H1 (cell line): ENCODE measurements at regions of chr6 and their contacts with region 1.

Region 1: GRCh38 chr6:168370310-168370991 is 50.9 kb upstream of the DACT2 start:
- DNase-seq: peak; percentile 46 to 97
- H3K4me3 ChIP-seq: no peak overlapping the region
- H3K27ac ChIP-seq: no peak overlapping the region
- H3K4me1 ChIP-seq: no peaks in the 10 kb centered on the region; a peak in 3 of 7 replicates
- H3K27me3 ChIP-seq: no peaks in the 10 kb centered on the region
- CTCF ChIP-seq: peak in 2 of 3 experiments; percentile 85 to 92; a peak in 3 of 4 replicates
- EP300 ChIP-seq: no peak
- POLR2A ChIP-seq: no peak
- RAD21 ChIP-seq: peak; percentile 98 to 100

Region 2: DNA sequence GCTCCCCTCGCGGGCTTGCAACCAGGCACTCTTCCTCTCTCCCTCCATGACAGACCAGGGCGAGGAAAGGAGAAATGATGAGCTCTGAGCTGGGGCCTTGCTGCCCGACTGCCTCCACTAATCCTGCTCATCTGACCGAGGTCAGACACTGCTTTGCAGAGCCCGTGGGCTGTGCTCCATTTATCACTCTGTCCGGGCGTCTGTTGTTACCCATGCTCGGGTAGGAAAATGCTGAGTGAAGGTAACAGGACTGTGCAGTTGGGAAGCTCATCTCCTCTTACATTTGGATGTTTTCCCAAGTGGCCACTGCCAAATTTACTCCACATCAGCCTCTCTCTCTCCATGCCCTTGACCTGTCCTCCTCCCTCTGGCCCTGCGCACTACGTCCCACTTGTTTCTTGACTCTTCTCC is 1758.0 kb before region 1 on chr6:
- CTCF ChIA-PET with region 1: no interaction called
- POLR2A ChIA-PET with region 1: no interaction called
- DNase-seq: no peak
- H3K4me3 ChIP-seq: no peak overlapping the region
- H3K27ac ChIP-seq: no peak overlapping the region
- H3K4me1 ChIP-seq: peaks cover 0 to 8% (median 4%) of the 10 kb centered on the region in 4 experiments; a peak in 4 of 7 replicates
- H3K27me3 ChIP-seq: no peaks in the 10 kb centered on the region
- CTCF ChIP-seq: no peak
- EP300 ChIP-seq: no peak
- POLR2A ChIP-seq: no peak
- RAD21 ChIP-seq: no peak

Region 3: GRCh38 chr6:168025831-168026710 is 344.4 kb before region 1 on chr6:
- CTCF ChIA-PET with region 1: no interaction called
- POLR2A ChIA-PET with region 1: no interaction called
- DNase-seq: peak in 1 of 2 experiments; percentile 37
- H3K4me3 ChIP-seq: no peak overlapping the region
- H3K27ac ChIP-seq: no peak overlapping the region
- H3K4me1 ChIP-seq: peaks cover 0 to 2% (median 0%) of the 10 kb centered on the region in 4 experiments; a peak in 1 of 7 replicates
- H3K27me3 ChIP-seq: no peaks in the 10 kb centered on the region
- CTCF ChIP-seq: no peak
- EP300 ChIP-seq: no peak
- POLR2A ChIP-seq: no peak
- RAD21 ChIP-seq: no peak

Region 4: DNA sequence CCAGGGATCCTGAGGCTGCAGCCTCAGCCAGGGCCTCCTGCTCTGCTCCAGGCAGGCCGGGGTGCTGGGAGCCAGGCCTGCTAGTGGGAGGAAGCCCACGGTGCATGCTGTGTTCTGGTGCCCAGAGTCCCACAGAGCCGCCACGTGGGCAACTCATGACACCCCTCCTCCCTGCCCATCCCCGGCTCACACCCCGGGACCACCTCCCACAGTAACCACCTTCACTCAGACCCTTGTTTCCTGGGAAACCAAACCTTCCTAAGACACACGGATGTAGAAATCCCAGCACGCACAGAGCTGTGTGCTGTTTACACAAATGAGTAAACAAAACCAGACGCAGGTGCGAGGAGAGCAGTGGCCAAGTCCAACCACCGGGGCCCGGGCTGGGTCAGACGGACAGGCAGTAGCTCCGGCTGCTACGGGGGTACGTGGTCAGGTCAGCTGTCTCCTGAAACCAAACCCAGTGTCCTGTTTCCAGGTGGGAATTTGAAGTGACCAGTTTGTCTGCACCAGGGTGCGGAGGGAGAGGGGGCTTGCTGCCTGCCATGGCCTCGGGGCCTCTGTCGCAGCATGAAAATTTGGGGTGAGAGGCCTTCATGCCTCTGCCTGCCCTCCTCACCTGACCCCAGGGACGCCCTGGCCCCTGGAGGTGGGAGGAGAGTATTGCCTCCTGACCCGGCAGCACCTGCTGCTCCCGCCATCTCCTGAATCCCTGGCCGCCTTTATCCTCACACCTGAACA is 18.4 kb after region 1 on chr6:
- CTCF ChIA-PET with region 1: interaction called, 11 read pairs
- POLR2A ChIA-PET with region 1: no interaction called
- DNase-seq: peak in 1 of 2 experiments; percentile 59
- H3K4me3 ChIP-seq: no peak overlapping the region
- H3K27ac ChIP-seq: no peak overlapping the region
- H3K4me1 ChIP-seq: peaks cover 0 to 13% (median 1%) of the 10 kb centered on the region in 4 experiments; a peak in 2 of 7 replicates
- H3K27me3 ChIP-seq: no peaks in the 10 kb centered on the region
- CTCF ChIP-seq: peak in 2 of 3 experiments; percentile 9 to 48; a peak in 1 of 4 replicates
- EP300 ChIP-seq: no peak
- POLR2A ChIP-seq: no peak
- RAD21 ChIP-seq: peak; percentile 20 to 35; a peak in 3 of 4 replicates

Region 5: GRCh38 chr6:168884646-168885086 is 514.2 kb after region 1 on chr6:
- CTCF ChIA-PET with region 1: interaction called, 15 read pairs
- POLR2A ChIA-PET with region 1: no interaction called
- DNase-seq: peak in 1 of 2 experiments; percentile 98
- H3K4me3 ChIP-seq: peak overlapping the region in 1 of 4 experiments; percentile 44; a peak in 1 of 8 replicates
- H3K27ac ChIP-seq: no peak overlapping the region
- H3K4me1 ChIP-seq: no peaks in the 10 kb centered on the region
- H3K27me3 ChIP-seq: peaks cover 0 to 11% (median 9%) of the 10 kb centered on the region in 4 experiments; a peak in 4 of 7 replicates
- CTCF ChIP-seq: peak; percentile 77 to 93 (median 88)
- EP300 ChIP-seq: 0 out of 3 replicates have a peak, but pooled peaks of 1 of the 2 experiments have one; percentile 24
- POLR2A ChIP-seq: no peak
- RAD21 ChIP-seq: peak; percentile 95 to 99

Region 6: DNA sequence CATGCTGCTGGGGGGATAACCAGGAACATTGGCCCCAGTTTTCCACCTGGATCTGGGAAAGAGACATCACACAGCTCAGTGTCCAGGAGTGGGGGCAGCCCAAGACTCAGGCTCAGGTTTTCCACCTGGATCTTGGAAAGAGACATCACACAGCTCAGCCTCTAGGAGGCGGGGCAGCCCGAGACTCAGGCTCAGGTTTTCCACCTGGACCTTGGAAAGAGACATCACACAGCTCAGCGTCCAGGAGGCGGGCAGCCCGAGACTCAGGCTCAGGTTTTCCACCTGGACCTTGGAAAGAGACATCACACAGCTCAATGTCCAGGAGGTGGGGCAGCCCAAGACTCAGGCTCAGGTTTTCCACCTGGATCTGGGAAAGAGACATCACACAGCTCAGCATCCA is 521.6 kb after region 1 on chr6:
- CTCF ChIA-PET with region 1: interaction called, 20 read pairs
- POLR2A ChIA-PET with region 1: no interaction called
- DNase-seq: no peak
- H3K4me3 ChIP-seq: no peak overlapping the region
- H3K27ac ChIP-seq: no peak overlapping the region
- H3K4me1 ChIP-seq: peaks cover 0 to 4% (median 1%) of the 10 kb centered on the region in 4 experiments; a peak in 1 of 7 replicates
- H3K27me3 ChIP-seq: no peaks in the 10 kb centered on the region
- CTCF ChIP-seq: peak in 2 of 3 experiments; percentile 15 to 37; a peak in 2 of 4 replicates
- EP300 ChIP-seq: no peak
- POLR2A ChIP-seq: no peak
- RAD21 ChIP-seq: peak; percentile 9 to 24; a peak in 2 of 4 replicates